IMR-90 (cell line): ENCODE measurements at regions of chr21 and their contacts with region 1.

Region 1: GRCh38 chr21:25062061-25062460 is 545.2 kb downstream of the MRPL39 start:
- DNase-seq: peak; percentile 6
- ATAC-seq: no peak
- H3K4me3 ChIP-seq: no peak overlapping the region
- H3K27ac ChIP-seq: no peak overlapping the region
- H3K4me1 ChIP-seq: no peaks in the 10 kb centered on the region
- H3K27me3 ChIP-seq: no peaks in the 10 kb centered on the region
- CTCF ChIP-seq: no peak
- POLR2A ChIP-seq: no peak
- RAD21 ChIP-seq: no peak

Region 2: GRCh38 chr21:25871566-25871965 is 809.5 kb after region 1 on chr21:
- CTCF ChIA-PET with region 1: no interaction called
- POLR2A ChIA-PET with region 1: interaction called, 16 read pairs
- dilution Hi-C with region 1: no loop called
- in situ Hi-C with region 1: no loop called
- intact Hi-C with region 1: no loop called
- DNase-seq: no peak
- ATAC-seq: no peak
- H3K4me3 ChIP-seq: no peak overlapping the region
- H3K27ac ChIP-seq: no peak overlapping the region
- H3K4me1 ChIP-seq: no peaks in the 10 kb centered on the region
- H3K27me3 ChIP-seq: no peaks in the 10 kb centered on the region
- CTCF ChIP-seq: 0 out of 2 replicates have a peak, but pooled peaks have one; percentile 6
- POLR2A ChIP-seq: no peak
- RAD21 ChIP-seq: no peak